ENCODE measurements at regions of chr15 and their contacts with region 1.

Region 1: GRCh38 chr15:84748274-84749110 is at the start of gene ZNF592:
- DNase-seq: peak; percentile 88 to 93
- ATAC-seq: peak; percentile 66 to 76 (median 72)
- H3K4me3 ChIP-seq: peak within 1 kb of the TSS; percentile 92
- H3K27ac ChIP-seq: peak within 1 kb of the TSS; percentile 99
- H3K4me1 ChIP-seq: peaks cover 67% of the 10 kb centered on the region
- H3K27me3 ChIP-seq: no peaks in the 10 kb centered on the region
- CTCF ChIP-seq: peak; percentile 58
- total RNA-seq, gene ZNF592: 33.4 to 39.5 (median 35.5) TPM

Region 2: GRCh38 chr15:84600851-84601838 is 147.3 kb before region 1 on chr15 and contains the start of gene ZSCAN2:
- intact Hi-C with region 1: loop called in 1 of 2 experiments (anchors 10 kb)
- DNase-seq: peak; percentile 96 to 97
- ATAC-seq: peak; percentile 97 to 99 (median 98)
- H3K4me3 ChIP-seq: peak within 1 kb of the TSS; percentile 100
- H3K27ac ChIP-seq: peak within 1 kb of the TSS; percentile 82
- H3K4me1 ChIP-seq: no peaks in the 10 kb centered on the region
- H3K27me3 ChIP-seq: no peaks in the 10 kb centered on the region
- CTCF ChIP-seq: no peak
- total RNA-seq, gene ZSCAN2: 3.3 to 5.4 (median 4.4) TPM

Region 3: GRCh38 chr15:84716036-84716799 is 32.3 kb before region 1 on chr15 and contains the start of gene SEC11A:
- intact Hi-C with region 1: loop called in 1 of 2 experiments (anchors 1 kb)
- DNase-seq: peak; percentile 97
- ATAC-seq: peak; percentile 97 to 98 (median 98)
- H3K4me3 ChIP-seq: peak within 1 kb of the TSS; percentile 90
- H3K27ac ChIP-seq: peak within 1 kb of the TSS; percentile 96
- H3K4me1 ChIP-seq: peaks cover 21% of the 10 kb centered on the region
- H3K27me3 ChIP-seq: no peaks in the 10 kb centered on the region
- CTCF ChIP-seq: no peak
- total RNA-seq, gene SEC11A: 80.7 to 106 (median 95.5) TPM

Region 4: GRCh38 chr15:84810073-84810840 is 61.8 kb after region 1 on chr15:
- intact Hi-C with region 1: loop called (anchors 2 to 5 kb)
- DNase-seq: peak in 1 of 2 donors; percentile 47
- ATAC-seq: peak; percentile 75 to 93 (median 92)
- H3K4me3 ChIP-seq: no peak overlapping the region
- H3K27ac ChIP-seq: peak overlapping the region; percentile 56
- H3K4me1 ChIP-seq: peaks cover 11% of the 10 kb centered on the region
- H3K27me3 ChIP-seq: no peaks in the 10 kb centered on the region
- CTCF ChIP-seq: no peak

Region 5: GRCh38 chr15:84929744-84930371 is 181.4 kb after region 1 on chr15:
- intact Hi-C with region 1: loop called in 1 of 2 experiments (anchors 10 kb)
- DNase-seq: no peak
- ATAC-seq: peak in 3 of 4 donors; percentile 22 to 39 (median 34)
- H3K4me3 ChIP-seq: no peak overlapping the region
- H3K27ac ChIP-seq: no peak overlapping the region
- H3K4me1 ChIP-seq: peaks cover 10% of the 10 kb centered on the region
- H3K27me3 ChIP-seq: no peaks in the 10 kb centered on the region
- CTCF ChIP-seq: no peak

Measured in psoas muscle (tissue), 8 donors.